Mammary epithelial cell (primary cell): ENCODE measurements at regions of chr6 and their contacts with region 1.

Region 1: DNA sequence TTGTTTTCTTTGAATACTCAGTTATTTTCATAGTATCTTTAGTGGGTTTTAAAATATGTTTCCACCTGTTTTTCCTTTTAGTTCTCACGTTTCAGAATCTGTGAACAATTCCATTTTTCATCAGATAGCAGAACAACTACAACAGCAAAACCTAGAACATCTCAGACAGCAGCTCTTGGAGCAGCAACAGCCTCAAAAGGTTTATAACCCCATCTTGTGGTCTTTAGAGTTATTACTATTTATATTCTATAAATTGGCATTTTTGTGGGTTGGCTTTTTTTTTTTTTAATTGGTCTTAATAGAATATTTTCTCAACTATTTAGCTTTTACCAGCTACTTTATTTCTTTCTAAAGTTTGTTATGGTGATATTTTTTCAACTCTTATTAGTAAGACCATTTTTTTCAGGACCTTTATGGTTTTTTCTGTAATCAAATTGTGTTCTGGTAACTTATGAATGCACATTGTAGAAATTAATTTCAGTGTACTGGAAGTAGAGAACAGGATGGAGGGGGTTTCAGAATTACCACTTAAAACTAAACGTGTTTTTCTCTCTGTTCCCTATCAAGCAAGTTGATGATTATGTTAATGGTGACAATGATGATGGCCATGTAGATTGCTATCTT is 72.2 kb downstream of the SCAF8 start:
- DNase-seq: peak; percentile 18
- H3K4me3 ChIP-seq: no peak overlapping the region
- H3K27ac ChIP-seq: no peak overlapping the region
- H3K4me1 ChIP-seq: no peaks in the 10 kb centered on the region
- H3K27me3 ChIP-seq: no peaks in the 10 kb centered on the region
- CTCF ChIP-seq: peak; percentile 21 to 54

Region 2: DNA sequence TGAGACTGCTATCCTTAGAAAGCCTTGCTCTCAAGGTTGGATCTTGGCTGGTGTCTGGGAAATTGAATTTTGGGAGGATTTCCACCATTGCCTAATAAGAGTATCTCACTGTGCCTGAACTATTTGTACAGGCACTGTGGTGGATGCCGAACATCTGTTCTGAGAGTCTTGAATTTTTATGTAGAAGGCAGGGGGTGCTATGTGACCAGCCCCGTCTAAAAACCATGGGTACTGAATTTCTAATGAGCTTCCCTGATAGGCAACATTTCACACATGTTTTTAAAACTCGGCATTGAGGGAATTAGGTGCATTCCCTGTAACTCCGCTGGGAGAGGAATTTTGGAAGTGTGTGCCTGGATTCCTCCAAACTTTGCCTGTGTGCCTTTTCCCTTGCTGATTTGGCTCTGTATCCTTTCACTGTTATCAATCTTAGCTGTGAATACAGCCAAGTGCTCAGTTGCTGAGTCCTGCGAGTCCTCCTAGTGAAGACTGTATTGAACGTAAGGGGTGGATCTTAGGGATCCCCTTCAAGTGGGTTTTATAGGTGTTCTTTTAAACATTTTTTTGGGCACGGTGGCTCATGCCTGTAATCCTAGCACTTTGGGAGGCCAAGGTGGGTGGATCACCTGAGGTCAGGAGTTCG is 99.8 kb before region 1 on chr6:
- CTCF ChIA-PET with region 1: no interaction called
- dilution Hi-C with region 1: no loop called
- in situ Hi-C with region 1: no loop called
- intact Hi-C with region 1: loop called (anchors 1 kb)
- DNase-seq: no peak
- H3K4me3 ChIP-seq: no peak overlapping the region
- H3K27ac ChIP-seq: no peak overlapping the region
- H3K4me1 ChIP-seq: no peaks in the 10 kb centered on the region
- H3K27me3 ChIP-seq: no peaks in the 10 kb centered on the region
- CTCF ChIP-seq: peak in 1 of 2 donors; percentile 17

Region 3: GRCh38 chr6:154733012-154733625 is 72.3 kb before region 1 on chr6 and contains the start of gene SCAF8:
- CTCF ChIA-PET with region 1: no interaction called
- dilution Hi-C with region 1: no loop called
- in situ Hi-C with region 1: no loop called
- intact Hi-C with region 1: loop called (anchors 1 kb)
- DNase-seq: peak; percentile 82
- H3K4me3 ChIP-seq: peak within 1 kb of the TSS; percentile 92 to 99 (median 97)
- H3K27ac ChIP-seq: peak within 1 kb of the TSS; percentile 91
- H3K4me1 ChIP-seq: peaks cover 10% of the 10 kb centered on the region
- H3K27me3 ChIP-seq: no peaks in the 10 kb centered on the region
- CTCF ChIP-seq: peak; percentile 65 to 71
- total RNA-seq, gene SCAF8: 31.8 to 36.9 TPM

Region 4: GRCh38 chr6:154945206-154945885 is 139.9 kb after region 1 on chr6:
- CTCF ChIA-PET with region 1: no interaction called
- dilution Hi-C with region 1: no loop called
- in situ Hi-C with region 1: no loop called
- intact Hi-C with region 1: no loop called
- DNase-seq: no peak
- H3K4me3 ChIP-seq: no peak overlapping the region
- H3K27ac ChIP-seq: no peak overlapping the region
- H3K4me1 ChIP-seq: no peaks in the 10 kb centered on the region
- H3K27me3 ChIP-seq: no peaks in the 10 kb centered on the region
- CTCF ChIP-seq: no peak

Region 5: DNA sequence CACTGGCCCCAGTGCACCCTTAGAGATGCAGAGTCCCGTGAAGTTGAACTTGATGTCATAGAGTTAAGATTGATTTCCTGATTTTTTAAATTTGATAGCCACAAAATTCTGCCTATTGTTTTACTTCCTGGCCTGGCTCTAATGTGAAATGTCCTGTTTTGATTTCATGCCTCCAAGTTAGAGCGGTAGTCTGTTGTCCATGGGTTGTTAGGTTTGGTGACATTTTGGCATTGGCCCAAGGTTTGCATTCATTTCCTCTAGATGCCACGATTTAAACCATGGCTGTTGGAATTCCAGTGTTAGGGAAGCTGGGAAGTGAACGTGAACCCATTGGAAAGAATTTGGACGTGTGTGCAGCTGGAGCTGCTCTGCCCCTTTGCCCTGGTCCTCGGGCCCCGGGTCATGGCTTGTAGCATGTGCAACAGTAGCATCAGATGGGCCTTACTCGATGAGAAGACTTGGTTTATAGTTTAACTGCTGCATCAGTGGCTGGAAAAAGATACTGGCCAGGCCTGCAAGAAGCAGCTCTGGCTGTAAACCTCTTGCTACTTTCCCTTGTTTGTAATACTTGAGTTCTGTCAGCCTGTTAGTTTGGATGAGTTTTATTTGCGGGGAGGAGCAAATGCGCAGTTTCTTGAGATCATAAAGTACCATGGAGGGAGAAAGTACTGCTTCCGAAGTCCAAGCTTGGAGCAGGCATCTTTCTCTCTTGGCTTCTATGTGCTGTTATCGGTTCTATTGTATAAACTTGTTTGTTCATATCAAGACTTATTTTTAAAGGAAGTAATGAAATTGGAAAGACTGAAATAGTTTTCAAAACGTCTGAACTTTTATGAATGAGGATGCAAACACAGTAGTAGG is 337.0 kb after region 1 on chr6:
- CTCF ChIA-PET with region 1: no interaction called
- dilution Hi-C with region 1: no loop called
- in situ Hi-C with region 1: no loop called
- intact Hi-C with region 1: no loop called
- DNase-seq: no peak
- H3K4me3 ChIP-seq: no peak overlapping the region
- H3K27ac ChIP-seq: no peak overlapping the region
- H3K4me1 ChIP-seq: no peaks in the 10 kb centered on the region
- H3K27me3 ChIP-seq: no peaks in the 10 kb centered on the region
- CTCF ChIP-seq: no peak